ENCODE measurements at regions of chr1 and their contacts with region 1.

Region 1: DNA sequence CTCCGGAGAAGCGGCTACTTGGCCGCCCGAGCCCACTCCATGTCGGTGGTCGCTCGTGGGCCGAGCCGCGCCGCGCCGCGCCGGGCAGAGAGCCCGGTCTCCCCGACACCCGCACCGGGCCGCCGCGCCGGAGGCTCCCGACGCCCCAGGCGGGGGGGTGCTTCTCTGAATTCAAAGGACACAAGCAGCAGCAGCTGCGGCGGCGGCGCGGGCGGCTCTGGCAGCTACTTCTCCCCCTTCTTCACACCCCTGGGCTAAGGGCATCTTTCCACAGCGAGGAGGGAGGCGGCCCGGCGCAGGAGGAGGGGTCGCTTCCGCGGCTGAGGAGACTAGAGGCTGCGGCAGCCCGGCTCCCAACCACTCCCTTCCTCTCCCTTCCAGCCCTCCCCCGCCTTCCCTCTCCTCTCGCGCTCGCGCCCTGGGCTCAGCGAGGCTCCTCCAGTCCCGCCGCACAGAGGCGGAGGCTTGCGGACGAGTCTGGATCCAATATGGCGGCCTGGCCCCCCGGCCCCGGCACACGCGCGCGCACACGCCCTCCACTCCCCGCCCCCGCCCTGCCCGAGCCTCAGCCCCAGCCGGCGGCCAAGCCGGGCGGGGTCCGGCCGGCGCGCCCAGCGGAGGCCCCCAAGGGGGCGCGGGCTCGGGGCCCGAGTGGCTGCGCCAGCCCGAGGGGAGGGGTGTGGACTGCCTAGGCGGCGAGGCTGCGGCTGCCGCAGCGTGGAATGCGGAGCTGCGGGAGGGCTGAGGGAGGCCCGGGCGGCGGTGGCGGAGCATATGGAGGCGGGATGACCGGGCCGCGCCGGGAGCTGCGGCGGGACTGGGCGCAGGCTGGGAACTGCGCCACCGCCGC is at the start of gene CDC42BPA:
- DNase-seq: peak in 8 of 9 donors; percentile 16 to 42 (median 22)
- ATAC-seq: peak; percentile 75
- H3K4me3 ChIP-seq: peak within 1 kb of the TSS; percentile 36
- H3K4me3 Mint-ChIP-seq: peak within 1 kb of the TSS; percentile 74 to 85 (median 82)
- H3K27ac ChIP-seq: no peak within 1 kb of the TSS
- H3K27ac Mint-ChIP-seq: peak within 1 kb of the TSS in 1 of 9 donors; percentile 33
- H3K4me1 ChIP-seq: peaks cover 0 to 4% of the 10 kb centered on the region in 2 donors
- H3K4me1 Mint-ChIP-seq: peaks cover 5 to 12% (median 8%) of the 10 kb centered on the region in 7 donors
- H3K27me3 ChIP-seq: peaks cover 3 to 5% of the 10 kb centered on the region in 2 donors
- H3K27me3 Mint-ChIP-seq: peaks cover 58 to 80% (median 69%) of the 10 kb centered on the region in 5 donors
- total RNA-seq, gene CDC42BPA: 0.78 to 2.0 (median 1.4) TPM

Region 2: DNA sequence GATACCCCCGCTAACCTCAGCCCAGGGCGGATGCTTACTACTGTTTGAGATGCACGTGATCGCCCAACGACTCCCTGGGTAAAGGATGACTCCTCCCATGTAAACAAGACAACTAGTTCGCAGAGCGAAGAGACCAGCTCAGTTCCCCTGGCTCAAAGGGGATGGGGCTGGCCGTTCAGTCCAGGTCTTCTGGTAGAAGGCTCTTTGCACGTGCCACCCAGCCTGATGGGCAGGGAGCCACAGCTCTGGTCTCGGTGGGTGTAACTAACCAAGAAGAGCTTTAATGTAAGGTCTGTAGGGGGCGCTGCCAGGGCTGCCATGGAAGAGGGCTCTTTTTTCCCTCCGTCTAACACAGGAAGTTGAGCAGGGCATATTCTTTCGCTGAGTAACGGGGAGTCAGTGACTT is 860.9 kb before region 1 on chr1:
- CTCF ChIA-PET with region 1: no interaction called
- POLR2A ChIA-PET with region 1: no interaction called
- intact Hi-C with region 1: no loop called
- DNase-seq: peak; percentile 13 to 76 (median 52)
- ATAC-seq: peak; percentile 90
- H3K4me3 ChIP-seq: peak overlapping the region; percentile 54
- H3K4me3 Mint-ChIP-seq: peak overlapping the region; percentile 47 to 88 (median 78)
- H3K27ac ChIP-seq: peak overlapping the region; percentile 4
- H3K27ac Mint-ChIP-seq: peak overlapping the region; percentile 17 to 88 (median 65)
- H3K4me1 ChIP-seq: peaks cover 7 to 16% of the 10 kb centered on the region in 2 donors
- H3K4me1 Mint-ChIP-seq: peaks cover 8 to 16% (median 14%) of the 10 kb centered on the region in 7 donors
- H3K27me3 ChIP-seq: no peaks in the 10 kb centered on the region
- H3K27me3 Mint-ChIP-seq: peaks cover 0 to 4% (median 0%) of the 10 kb centered on the region in 5 donors

Region 3: DNA sequence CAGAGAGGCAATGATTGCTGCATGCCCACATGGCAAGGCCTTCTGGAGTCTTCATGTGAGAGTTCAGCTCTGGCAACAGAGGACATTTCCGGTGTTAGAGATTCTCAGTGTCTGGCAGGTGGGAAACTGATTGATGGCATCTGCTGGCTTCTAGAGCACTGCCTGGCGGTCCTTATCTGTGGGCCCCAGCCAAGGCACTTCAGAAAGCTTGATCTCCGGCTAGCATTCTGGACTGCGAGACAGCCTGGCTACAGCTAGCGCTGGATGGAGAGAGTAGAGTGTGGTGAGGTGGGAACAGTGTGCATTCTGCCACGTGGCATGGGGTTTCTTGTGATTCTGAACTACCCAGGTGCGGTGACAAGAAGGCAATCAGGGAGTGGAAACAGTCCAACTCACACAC is 254.5 kb after region 1 on chr1:
- CTCF ChIA-PET with region 1: no interaction called
- POLR2A ChIA-PET with region 1: no interaction called
- intact Hi-C with region 1: no loop called
- DNase-seq: no peak
- ATAC-seq: no peak
- H3K4me3 ChIP-seq: no peak overlapping the region
- H3K4me3 Mint-ChIP-seq: peak overlapping the region in 1 of 10 donors; percentile 25
- H3K27ac ChIP-seq: no peak overlapping the region
- H3K27ac Mint-ChIP-seq: no peak overlapping the region
- H3K4me1 ChIP-seq: no peaks in the 10 kb centered on the region
- H3K4me1 Mint-ChIP-seq: peaks cover 0 to 62% (median 43%) of the 10 kb centered on the region in 7 donors
- H3K27me3 ChIP-seq: no peaks in the 10 kb centered on the region
- H3K27me3 Mint-ChIP-seq: no peaks in the 10 kb centered on the region

Region 4: GRCh38 chr1:227742738-227743715 is 424.8 kb after region 1 on chr1:
- CTCF ChIA-PET with region 1: no interaction called
- POLR2A ChIA-PET with region 1: no interaction called
- intact Hi-C with region 1: loop called in 1 of 2 experiments (anchors 5 kb)
- DNase-seq: no peak
- ATAC-seq: no peak
- H3K4me3 ChIP-seq: no peak overlapping the region
- H3K4me3 Mint-ChIP-seq: no peak overlapping the region
- H3K27ac ChIP-seq: no peak overlapping the region
- H3K27ac Mint-ChIP-seq: peak overlapping the region in 4 of 9 donors; percentile 1 to 74 (median 28)
- H3K4me1 ChIP-seq: peaks cover 7 to 11% of the 10 kb centered on the region in 2 donors
- H3K4me1 Mint-ChIP-seq: peaks cover 35 to 82% (median 61%) of the 10 kb centered on the region in 7 donors
- H3K27me3 ChIP-seq: no peaks in the 10 kb centered on the region
- H3K27me3 Mint-ChIP-seq: no peaks in the 10 kb centered on the region